Tibial artery (tissue), 4 donors: ENCODE measurements at regions of chrX and their contacts with region 1.

Region 1: GRCh38 chrX:71178908-71179307 is 34.3 kb downstream of the NLGN3 start:
- DNase-seq: peak; percentile 31 to 72
- H3K4me3 ChIP-seq: no peak overlapping the region
- H3K27ac ChIP-seq: no peak overlapping the region
- H3K4me1 ChIP-seq: peaks cover 0 to 13% (median 2%) of the 10 kb centered on the region in 4 donors
- H3K27me3 ChIP-seq: no peaks in the 10 kb centered on the region
- CTCF ChIP-seq: peak; percentile 53 to 68

Region 2: DNA sequence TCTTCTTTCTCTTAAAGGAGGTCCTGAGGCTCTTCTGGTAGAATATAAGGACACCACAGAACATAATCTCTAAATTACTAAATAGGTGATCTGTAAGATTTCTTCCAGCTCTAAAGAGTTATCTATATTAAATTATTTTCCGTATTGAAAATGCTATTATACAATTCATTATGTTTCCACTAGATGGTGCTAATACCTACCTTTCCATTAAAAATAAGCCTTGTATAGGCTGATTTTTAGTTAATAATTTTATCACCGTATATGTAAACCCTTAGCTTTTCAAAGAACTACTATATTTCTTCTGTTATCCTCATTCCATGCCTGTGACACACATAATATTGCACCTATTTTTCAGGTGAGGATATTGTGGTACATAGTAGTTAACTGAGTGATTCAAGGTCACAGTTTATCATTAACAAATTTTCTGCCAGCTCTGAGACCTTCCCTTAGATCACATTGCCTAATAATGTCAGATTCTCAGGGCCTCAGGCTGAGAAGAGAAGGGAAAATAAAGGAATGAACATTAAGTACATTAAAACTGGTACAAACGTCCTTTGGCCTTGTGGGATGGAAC is 409.2 kb before region 1 on chrX:
- intact Hi-C with region 1: loop called (anchors 5 kb)
- DNase-seq: no peak
- H3K4me3 ChIP-seq: no peak overlapping the region
- H3K27ac ChIP-seq: no peak overlapping the region
- H3K4me1 ChIP-seq: no peaks in the 10 kb centered on the region
- H3K27me3 ChIP-seq: no peaks in the 10 kb centered on the region
- CTCF ChIP-seq: peak in 1 of 2 experiments; percentile 15

Region 3: GRCh38 chrX:70970482-70970995 is 208.4 kb before region 1 on chrX:
- intact Hi-C with region 1: loop called (anchors 10 kb)
- DNase-seq: no peak
- H3K4me3 ChIP-seq: no peak overlapping the region
- H3K27ac ChIP-seq: no peak overlapping the region
- H3K4me1 ChIP-seq: no peaks in the 10 kb centered on the region
- H3K27me3 ChIP-seq: no peaks in the 10 kb centered on the region
- CTCF ChIP-seq: peak; percentile 23 to 34

Region 4: GRCh38 chrX:71095543-71095911 is 83.4 kb before region 1 on chrX and contains the start of gene FOXO4:
- intact Hi-C with region 1: loop called (anchors 10 kb)
- DNase-seq: peak; percentile 93 to 94
- H3K4me3 ChIP-seq: peak within 1 kb of the TSS; percentile 61 to 66
- H3K27ac ChIP-seq: peak within 1 kb of the TSS; percentile 76 to 79
- H3K4me1 ChIP-seq: peaks cover 0 to 20% (median 8%) of the 10 kb centered on the region in 4 donors
- H3K27me3 ChIP-seq: no peaks in the 10 kb centered on the region
- CTCF ChIP-seq: no peak